Activated CD4-positive, alpha-beta memory T cell treated with anti-CD3 and anti-CD28 coated beads for 36 hours (primary cell): ENCODE measurements at regions of chr1 and their contacts with region 1.

Region 1: DNA sequence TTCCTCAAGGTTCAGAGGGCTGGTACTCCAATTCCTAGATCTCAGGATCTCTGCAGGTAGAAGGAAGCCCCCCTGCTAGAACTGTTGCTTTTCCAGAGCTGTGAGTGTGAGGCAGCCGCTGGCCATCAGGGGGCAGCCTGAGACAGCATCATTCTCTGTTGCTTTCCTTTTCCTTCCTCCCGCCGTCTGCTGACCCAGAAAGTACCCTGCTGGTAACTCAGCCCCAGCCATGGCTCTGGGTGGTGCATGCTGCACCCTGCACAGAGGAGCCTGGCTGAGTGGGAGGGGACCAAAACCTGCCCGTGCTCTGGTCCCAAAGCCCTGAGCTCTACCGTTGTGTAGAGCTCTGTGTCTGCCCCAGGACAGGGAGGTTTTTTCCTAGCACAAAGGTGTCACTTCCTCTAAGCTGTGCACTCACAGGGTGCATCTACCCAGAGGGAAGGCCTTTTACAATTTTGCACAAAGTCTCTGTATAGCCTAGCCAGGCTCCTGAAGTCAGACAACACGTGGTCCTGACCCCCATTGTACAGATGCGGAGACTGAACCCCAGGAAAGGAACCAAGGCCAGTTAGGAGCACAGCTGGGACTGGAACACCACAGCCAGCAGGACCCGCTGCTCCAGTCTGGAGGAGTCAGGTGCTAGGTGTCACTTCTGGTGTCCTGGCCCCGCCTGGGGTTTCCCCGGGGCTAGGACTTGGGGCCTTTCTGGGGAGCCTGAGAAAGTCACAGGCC is 5.6 kb upstream of the FAM131C start:
- DNase-seq: peak; percentile 84
- H3K4me3 Mint-ChIP-seq: peak overlapping the region; percentile 60
- H3K27ac Mint-ChIP-seq: no peak overlapping the region
- H3K4me1 Mint-ChIP-seq: peaks cover 9% of the 10 kb centered on the region
- H3K27me3 Mint-ChIP-seq: peaks cover 4% of the 10 kb centered on the region

Region 2: DNA sequence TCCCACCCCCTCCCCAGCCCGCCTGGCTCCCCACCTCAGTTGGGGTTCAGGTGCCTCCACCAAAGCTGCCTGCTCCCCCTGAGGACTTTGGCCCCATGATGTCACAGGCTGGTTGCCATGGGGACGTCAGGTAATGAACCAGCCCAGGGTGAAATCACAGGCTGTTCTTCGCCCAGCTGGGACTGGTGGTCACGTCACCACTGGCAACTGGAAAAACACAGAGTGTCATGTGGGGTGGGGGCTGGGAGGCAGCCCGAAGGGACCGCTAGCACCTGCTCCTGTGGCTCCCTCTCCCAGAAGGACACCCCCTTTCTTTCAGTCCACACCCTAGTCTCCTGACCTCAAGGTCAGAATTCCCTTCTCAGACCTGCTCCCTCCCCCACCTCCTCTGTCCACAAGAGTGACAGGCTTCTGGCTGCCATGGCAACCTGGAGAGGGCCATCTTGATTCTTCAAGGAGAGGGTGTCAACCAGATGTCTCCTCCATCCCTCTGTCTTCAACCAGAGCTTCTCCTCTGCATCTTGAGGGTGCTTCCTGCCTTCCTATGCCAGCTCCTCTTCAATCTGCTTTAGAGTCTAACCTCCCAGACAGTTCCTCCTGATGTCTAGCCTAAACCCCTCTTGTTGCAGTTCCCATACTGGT is 11.8 kb before region 1 on chr1:
- CTCF ChIA-PET with region 1: interaction called, 31 read pairs
- POLR2A ChIA-PET with region 1: interaction called, 4 read pairs
- intact Hi-C with region 1: no loop called
- DNase-seq: no peak
- H3K4me3 Mint-ChIP-seq: no peak overlapping the region
- H3K27ac Mint-ChIP-seq: no peak overlapping the region
- H3K4me1 Mint-ChIP-seq: peaks cover 15% of the 10 kb centered on the region
- H3K27me3 Mint-ChIP-seq: no peaks in the 10 kb centered on the region

Region 3: DNA sequence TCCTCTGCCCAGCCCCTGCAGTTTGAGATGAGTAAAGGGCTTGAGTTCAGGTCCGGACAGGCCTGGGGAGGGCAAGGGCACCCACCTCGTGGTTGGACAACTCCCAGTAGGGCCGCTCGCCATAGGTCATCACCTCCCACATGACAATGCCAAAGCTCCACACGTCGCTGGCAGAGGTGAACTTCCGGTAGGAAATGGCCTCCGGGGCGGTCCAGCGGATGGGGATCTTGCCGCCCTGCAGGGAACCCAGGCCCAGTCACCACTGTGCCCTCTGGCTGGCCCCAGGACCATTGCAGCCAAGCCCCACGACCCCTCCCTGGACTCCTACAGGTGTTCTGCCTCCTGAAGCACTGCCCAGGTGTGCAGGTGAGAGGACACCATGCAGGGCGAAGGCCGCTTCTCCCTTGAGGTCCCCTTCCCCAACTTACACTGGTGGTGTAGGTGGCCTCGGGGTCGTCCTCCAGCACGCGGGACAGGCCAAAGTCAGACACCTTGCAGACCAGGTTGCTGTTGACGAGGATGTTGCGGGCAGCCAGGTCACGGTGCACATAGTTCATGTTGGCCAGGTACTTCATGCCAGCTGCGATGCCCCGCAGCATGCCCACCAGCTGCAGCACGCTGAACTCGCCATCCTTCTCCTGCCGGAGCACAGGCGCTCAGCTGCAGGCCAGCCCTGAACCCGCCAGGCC is 52.7 kb after region 1 on chr1:
- CTCF ChIA-PET with region 1: interaction called, 10 read pairs
- POLR2A ChIA-PET with region 1: no interaction called
- intact Hi-C with region 1: no loop called
- DNase-seq: no peak
- H3K4me3 Mint-ChIP-seq: no peak overlapping the region
- H3K27ac Mint-ChIP-seq: no peak overlapping the region
- H3K4me1 Mint-ChIP-seq: no peaks in the 10 kb centered on the region
- H3K27me3 Mint-ChIP-seq: no peaks in the 10 kb centered on the region

Region 4: DNA sequence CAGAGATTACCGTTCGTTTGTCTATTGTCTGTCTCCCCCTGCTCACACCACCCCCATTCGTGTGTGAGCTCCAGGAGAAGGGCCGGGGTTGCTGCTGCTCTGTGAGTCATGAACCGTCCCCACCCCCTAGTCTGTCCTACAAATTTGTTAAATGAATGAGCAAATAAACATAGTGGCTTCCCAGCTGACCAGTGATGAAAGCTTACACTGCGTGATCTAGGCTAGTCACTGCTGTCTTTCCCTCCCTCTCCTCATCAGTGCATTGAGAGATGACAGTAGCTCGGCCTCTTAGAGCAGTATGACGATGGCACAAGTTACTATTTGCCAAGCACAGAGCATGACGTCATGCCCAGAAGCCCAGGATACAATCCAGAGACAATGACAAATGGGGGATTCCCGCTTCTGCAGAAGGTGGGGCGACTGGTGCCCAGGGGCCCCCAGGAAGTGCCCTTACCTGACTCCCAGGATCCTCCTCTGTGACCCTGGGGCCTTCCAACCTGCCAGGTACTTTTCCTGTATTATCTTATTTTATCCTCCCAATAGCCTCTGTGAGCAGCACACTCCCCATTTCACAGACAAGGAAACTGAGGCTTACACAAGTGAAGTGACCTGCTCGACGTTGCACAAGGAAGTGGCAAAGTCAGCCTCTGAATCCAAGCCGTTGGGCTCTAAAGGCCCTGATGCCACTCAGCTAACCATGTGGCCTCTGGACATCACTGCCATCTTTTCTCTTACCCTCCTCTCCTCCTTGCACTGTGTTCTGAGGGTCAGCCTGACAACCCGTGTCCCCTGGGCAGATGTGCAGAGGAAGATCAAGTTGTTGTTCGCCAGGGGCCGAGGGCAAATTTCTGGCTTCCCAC is 85.4 kb after region 1 on chr1:
- CTCF ChIA-PET with region 1: interaction called, 10 read pairs
- POLR2A ChIA-PET with region 1: no interaction called
- intact Hi-C with region 1: no loop called
- DNase-seq: peak; percentile 46
- H3K4me3 Mint-ChIP-seq: no peak overlapping the region
- H3K27ac Mint-ChIP-seq: no peak overlapping the region
- H3K4me1 Mint-ChIP-seq: peaks cover 52% of the 10 kb centered on the region
- H3K27me3 Mint-ChIP-seq: no peaks in the 10 kb centered on the region

Region 5: GRCh38 chr1:16187748-16188401 is 108.8 kb after region 1 on chr1:
- CTCF ChIA-PET with region 1: interaction called, 381 read pairs
- POLR2A ChIA-PET with region 1: interaction called, 3 read pairs
- intact Hi-C with region 1: loop called (anchors 1 kb)
- DNase-seq: peak; percentile 83
- H3K4me3 Mint-ChIP-seq: no peak overlapping the region
- H3K27ac Mint-ChIP-seq: no peak overlapping the region
- H3K4me1 Mint-ChIP-seq: no peaks in the 10 kb centered on the region
- H3K27me3 Mint-ChIP-seq: peaks cover 5% of the 10 kb centered on the region

Region 6: DNA sequence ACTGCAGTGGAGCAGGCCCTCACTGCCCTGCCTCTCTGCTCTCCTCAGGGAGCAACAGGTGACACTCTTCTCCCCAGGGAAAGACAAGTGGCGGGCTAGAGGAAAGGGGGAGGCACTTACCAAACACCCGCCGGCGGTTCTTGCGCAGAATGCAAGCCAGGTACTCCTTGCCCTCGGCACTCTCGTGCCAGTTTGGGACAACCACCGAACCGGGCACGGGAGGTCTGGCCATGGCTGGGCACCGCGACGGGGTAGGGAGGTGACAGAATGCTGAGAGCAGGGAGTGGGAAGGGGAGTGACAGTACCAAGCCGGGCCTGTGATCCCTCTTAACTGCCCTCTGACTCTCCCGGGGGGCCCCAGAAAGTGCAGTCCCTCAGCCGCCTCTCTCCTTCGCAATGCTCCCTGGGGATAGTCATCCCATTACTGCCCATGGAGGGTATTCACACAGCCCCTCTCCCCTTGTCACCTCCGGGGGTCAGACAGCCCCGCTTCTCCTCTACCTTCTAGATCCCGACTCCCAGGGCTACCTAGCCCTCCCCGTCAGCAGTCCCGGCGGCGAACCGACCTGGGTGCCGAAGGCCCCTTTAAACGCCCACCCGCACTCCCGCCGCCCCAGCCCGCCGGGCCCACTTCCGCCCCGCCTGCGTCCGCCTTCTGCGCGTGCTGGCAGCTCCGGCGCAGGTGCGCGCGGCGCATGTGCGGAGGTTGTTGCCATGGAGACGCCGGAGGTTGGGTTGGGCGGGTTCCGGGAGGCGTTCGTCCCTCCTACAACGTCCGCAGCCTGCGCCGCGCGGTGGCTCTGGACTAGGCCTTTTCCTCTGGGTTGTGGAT is 157.6 kb after region 1 on chr1 and contains the start of gene CPLANE2:
- CTCF ChIA-PET with region 1: interaction called, 66 read pairs
- POLR2A ChIA-PET with region 1: no interaction called
- intact Hi-C with region 1: no loop called
- DNase-seq: peak; percentile 98
- H3K4me3 Mint-ChIP-seq: peak within 1 kb of the TSS; percentile 85
- H3K27ac Mint-ChIP-seq: peak within 1 kb of the TSS; percentile 82
- H3K4me1 Mint-ChIP-seq: peaks cover 17% of the 10 kb centered on the region
- H3K27me3 Mint-ChIP-seq: no peaks in the 10 kb centered on the region
- total RNA-seq, gene CPLANE2: 3.9 to 5.0 TPM

Region 7: GRCh38 chr1:16243936-16244649 is 165.0 kb after region 1 on chr1:
- CTCF ChIA-PET with region 1: interaction called, 66 read pairs
- POLR2A ChIA-PET with region 1: no interaction called
- intact Hi-C with region 1: loop called (anchors 1 kb)
- DNase-seq: peak; percentile 86
- H3K4me3 Mint-ChIP-seq: no peak overlapping the region
- H3K27ac Mint-ChIP-seq: no peak overlapping the region
- H3K4me1 Mint-ChIP-seq: peaks cover 8% of the 10 kb centered on the region
- H3K27me3 Mint-ChIP-seq: no peaks in the 10 kb centered on the region

Region 8: DNA sequence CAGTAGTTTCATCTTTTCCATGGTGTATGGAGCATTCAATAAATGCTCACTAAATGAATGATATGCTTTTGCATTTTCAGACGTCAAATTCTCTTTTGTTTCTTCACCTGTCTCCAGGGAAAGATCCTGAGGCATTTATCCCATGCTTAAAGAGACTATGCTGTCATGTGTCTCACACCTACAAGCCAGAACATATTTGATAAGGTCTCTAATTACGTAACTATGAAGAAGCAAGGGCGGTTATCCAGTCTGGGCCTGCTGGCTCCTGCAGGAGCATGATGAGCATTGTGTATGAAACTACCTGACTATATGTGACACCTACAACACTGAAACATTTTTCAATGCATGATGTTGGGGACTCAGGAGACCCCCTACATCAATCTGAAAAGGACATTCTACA is 221.3 kb after region 1 on chr1:
- CTCF ChIA-PET with region 1: no interaction called
- POLR2A ChIA-PET with region 1: no interaction called
- intact Hi-C with region 1: no loop called
- DNase-seq: no peak
- H3K4me3 Mint-ChIP-seq: no peak overlapping the region
- H3K27ac Mint-ChIP-seq: no peak overlapping the region
- H3K4me1 Mint-ChIP-seq: no peaks in the 10 kb centered on the region
- H3K27me3 Mint-ChIP-seq: no peaks in the 10 kb centered on the region